Head of caudate nucleus (tissue), 42 donors: ENCODE measurements at regions of chr15 and their contacts with region 1.

Region 1: GRCh38 chr15:74127260-74127953 is 3.0 kb upstream of the ISLR2 start:
- DNase-seq: peak; percentile 82 to 98 (median 92)

Region 2: DNA sequence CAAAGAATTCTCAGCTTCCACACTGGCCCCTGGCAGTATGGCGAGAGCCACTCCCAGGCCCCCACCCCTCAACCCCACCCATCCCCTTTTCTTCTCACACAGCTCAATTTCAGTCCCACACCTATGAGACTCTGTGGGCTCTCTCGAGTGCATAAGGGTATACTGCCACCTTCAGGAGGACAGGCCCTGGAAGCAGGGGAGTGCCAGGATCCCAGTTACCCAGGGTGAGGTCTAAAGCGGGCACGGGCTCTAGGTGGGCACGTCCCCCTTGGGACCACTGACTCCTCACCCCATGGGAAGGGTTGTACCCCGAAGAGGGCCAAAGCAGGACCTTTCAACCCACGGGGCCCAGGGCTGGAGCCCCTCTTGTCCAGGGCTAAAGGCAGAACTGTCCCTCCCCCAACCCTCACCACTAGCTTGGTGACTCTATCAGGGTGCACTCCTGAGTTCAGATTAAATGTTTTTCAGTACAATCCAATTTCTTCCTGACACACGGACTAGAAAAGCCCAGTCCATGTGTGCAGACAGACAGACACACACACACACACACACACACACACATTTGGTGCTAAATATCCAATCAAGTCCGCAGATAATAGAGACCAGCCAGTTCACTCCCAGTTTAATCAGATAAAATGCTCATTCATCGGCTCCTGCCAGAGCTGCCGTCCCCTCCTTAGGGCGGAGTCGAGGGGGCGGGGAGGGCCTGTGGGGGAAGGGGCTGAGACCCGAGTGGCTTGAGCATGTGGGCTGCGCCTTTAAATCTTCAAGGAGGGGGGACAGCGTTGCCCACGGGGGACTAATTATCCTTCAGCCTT is 180.6 kb after region 1 on chr15:
- intact Hi-C with region 1: loop called (anchors 5 kb)
- DNase-seq: peak; percentile 27 to 84 (median 64)

Region 3: DNA sequence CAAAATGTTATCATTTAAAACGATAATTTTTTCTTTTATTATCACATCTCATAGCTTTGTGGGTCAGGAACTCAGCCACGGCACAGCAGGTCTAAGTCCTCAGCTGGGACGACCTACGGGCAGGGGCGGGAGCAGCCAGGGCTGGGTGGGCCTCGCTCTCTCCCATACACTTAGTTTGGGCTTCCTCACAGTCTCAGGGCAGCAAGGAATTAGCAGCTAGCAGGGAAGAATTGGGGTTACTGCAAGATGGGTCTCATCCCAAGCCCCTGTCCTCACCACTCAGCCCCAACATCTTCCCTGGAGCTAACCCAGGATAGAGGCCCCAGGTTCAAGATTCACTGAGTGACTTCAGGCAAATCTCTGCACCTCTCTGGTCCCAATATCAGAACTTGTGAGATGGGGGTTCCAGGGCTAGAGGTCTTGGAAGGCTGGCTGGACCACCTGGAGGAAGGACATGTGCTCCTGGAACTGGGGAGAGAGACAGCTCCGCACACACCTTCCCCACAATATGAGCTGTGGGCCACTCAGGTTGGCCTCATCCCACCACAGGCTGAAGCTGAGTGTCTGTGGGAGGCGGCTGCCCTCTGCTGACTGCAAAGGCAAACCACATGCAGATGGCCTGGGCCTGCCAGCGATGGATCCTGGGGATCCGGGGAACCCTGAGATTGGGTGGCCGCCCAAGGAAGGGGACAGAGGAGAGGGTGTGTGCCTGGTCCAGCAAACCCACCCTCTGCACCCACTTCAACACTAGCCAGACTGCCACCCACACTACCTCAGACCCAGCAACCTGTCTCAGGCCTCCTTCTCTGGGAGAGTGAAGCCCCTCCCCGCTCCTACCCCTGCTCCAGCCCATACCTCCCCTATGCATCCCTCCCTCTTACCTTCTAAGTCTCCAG is 195.0 kb after region 1 on chr15:
- intact Hi-C with region 1: loop called (anchors 5 kb)
- DNase-seq: peak; percentile 41 to 86 (median 64)